OCI-LY7 (cell line): ENCODE measurements at regions of chr5 and their contacts with region 1.

Region 1: DNA sequence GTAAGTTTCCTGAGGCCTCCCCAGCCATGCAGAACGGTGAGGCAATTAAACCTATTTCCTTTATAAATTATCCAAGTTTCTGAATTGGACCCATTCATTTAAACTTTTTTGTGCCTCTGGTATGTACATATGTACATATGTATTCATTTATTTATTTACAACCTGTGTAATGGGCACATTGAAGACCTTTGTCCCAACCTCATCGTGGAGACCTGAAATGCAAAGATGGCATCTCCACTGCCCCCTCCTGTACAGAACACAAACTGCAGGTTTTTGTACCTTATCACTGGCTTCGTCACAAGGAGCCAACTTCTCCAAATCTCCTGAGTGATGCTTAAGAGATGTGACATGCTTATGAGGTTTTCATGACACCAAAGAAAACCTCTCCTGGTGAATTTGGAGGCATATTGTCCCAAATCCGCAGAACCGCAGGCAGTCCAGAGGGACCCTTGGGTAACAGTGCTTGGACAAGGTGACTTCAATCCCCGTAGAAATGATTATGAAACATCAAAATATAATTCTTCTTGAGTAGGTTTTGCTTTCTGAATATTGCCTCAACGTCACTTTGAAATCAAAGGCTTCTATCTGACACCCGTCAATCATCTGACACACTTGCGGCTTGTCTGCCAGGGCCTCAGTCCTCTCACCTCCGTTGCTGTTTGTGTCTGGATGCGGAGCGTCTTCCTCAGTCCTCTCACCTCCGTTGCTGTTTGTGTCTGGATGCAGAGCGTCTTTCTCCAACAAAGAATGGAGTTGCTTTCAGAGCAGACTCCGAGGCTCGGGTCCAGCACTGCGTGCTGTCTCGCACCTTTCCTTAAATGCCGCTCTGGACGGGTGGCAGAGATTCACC is 135.0 kb upstream of the IRX4 start:
- DNase-seq: peak; percentile 46
- H3K4me3 ChIP-seq: no peak overlapping the region
- H3K27ac ChIP-seq: no peak overlapping the region
- H3K4me1 ChIP-seq: no peaks in the 10 kb centered on the region
- CTCF ChIP-seq: peak; percentile 83

Region 2: DNA sequence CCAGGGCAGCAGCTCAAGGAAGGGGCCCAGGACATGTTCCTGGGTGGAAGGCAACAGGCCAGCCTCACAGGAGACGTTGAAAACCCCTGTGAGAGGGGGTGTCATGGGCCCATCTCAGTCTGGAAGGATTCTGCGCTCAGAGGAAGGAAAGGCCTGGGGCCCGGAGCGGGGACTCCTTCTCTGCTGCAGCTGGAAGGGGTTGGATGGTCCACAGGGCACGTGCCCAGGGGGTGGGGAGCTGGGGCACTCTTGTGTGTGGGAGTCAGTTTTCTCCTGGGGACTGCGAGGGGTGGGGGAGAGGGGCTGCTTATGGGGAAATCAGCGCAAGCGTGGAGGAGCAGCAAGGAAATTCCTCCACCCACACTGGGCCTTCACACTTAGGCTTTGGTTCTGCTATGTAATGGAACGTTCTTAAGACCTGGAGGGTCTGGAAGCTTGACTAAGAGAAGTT is 491.1 kb before region 1 on chr5:
- CTCF ChIA-PET with region 1: no interaction called
- POLR2A ChIA-PET with region 1: no interaction called
- intact Hi-C with region 1: no loop called
- DNase-seq: peak; percentile 32
- H3K4me3 ChIP-seq: peak overlapping the region; percentile 90
- H3K27ac ChIP-seq: peak overlapping the region; percentile 87
- H3K4me1 ChIP-seq: peaks cover 48% of the 10 kb centered on the region
- CTCF ChIP-seq: no peak

Region 3: GRCh38 chr5:1737790-1738405 is 279.9 kb before region 1 on chr5:
- CTCF ChIA-PET with region 1: no interaction called
- POLR2A ChIA-PET with region 1: no interaction called
- intact Hi-C with region 1: loop called (anchors 1 kb)
- DNase-seq: peak; percentile 68
- H3K4me3 ChIP-seq: no peak overlapping the region
- H3K27ac ChIP-seq: no peak overlapping the region
- H3K4me1 ChIP-seq: no peaks in the 10 kb centered on the region
- CTCF ChIP-seq: peak; percentile 96